Activated T-helper 1 cell treated with anti-CD3 and anti-CD28 coated beads, Interleukin-12 subunit alpha, Interleukin-12 subunit beta, Interleukin-2, Interleukin-4 antibody, amounts not matched to agents 30 ng/mL and 10 ng/mL and 1 ng/mL, durations not matched to agents 14 hours and 24 hours and 36 hours (primary cell): ENCODE measurements at regions of chr2 and their contacts with region 1.

Region 1: DNA sequence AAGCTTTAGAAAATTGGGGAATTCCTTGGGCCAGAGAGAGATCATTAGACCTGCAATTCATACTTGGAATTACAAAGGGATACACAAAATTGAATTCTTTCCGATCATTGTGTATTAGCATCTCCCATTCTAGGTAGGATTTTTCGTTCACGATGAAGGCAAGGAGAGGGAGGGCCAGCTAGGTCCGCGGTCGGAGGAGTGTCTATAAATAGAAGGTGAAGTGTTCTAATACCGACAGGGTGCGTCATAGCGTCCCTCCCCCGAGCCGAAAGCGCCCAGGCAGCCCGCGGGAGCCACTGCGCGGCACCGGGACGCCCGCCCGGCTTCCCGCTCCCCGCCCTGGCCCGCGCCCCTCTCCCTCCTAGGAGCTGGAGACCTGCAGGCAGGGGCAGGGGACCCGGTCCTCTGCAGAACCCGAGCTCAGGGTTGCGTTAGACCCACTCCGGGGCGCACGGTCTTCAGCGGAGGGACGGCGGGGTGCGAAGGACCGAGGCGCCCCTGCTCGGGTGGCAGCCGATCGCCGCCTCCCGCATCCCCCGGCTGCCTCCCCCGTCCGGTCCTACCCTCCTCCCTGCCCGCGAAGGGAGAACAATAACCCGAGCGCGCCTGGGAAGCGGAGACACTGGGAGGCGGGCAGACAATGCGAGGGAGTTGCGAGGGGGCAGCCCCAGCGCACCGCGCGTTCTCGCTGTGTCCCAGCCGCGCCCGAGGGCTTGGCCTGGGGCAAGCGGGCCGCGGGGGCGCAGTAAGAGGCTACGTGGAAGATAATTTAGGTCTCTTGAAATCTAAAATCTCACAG is 114.2 kb upstream of the SERTAD2 start:
- DNase-seq: peak; percentile 69
- H3K4me3 Mint-ChIP-seq: peak overlapping the region; percentile 91
- H3K27ac Mint-ChIP-seq: peak overlapping the region; percentile 95
- H3K4me1 Mint-ChIP-seq: peaks cover 47% of the 10 kb centered on the region
- H3K27me3 Mint-ChIP-seq: no peaks in the 10 kb centered on the region

Region 2: GRCh38 chr2:64653349-64654062 is 114.4 kb before region 1 on chr2 and contains the start of gene SERTAD2:
- intact Hi-C with region 1: loop called (anchors 1 kb)
- DNase-seq: peak; percentile 83
- H3K4me3 Mint-ChIP-seq: peak within 1 kb of the TSS; percentile 90
- H3K27ac Mint-ChIP-seq: peak within 1 kb of the TSS; percentile 90
- H3K4me1 Mint-ChIP-seq: peaks cover 71% of the 10 kb centered on the region
- H3K27me3 Mint-ChIP-seq: no peaks in the 10 kb centered on the region
- total RNA-seq, gene SERTAD2: 27.3 and 28.5 TPM in 2 replicates

Region 3: GRCh38 chr2:64737547-64737946 is 30.3 kb before region 1 on chr2:
- intact Hi-C with region 1: loop called (anchors 1 kb)
- DNase-seq: no peak
- H3K4me3 Mint-ChIP-seq: peak overlapping the region; percentile 46
- H3K27ac Mint-ChIP-seq: peak overlapping the region; percentile 91
- H3K4me1 Mint-ChIP-seq: peaks cover 54% of the 10 kb centered on the region
- H3K27me3 Mint-ChIP-seq: no peaks in the 10 kb centered on the region

Region 4: GRCh38 chr2:64819774-64820696 is 52.2 kb after region 1 on chr2:
- intact Hi-C with region 1: loop called (anchors 1 kb)
- DNase-seq: peak; percentile 30
- H3K4me3 Mint-ChIP-seq: peak overlapping the region; percentile 68
- H3K27ac Mint-ChIP-seq: peak overlapping the region; percentile 93
- H3K4me1 Mint-ChIP-seq: peaks cover 39% of the 10 kb centered on the region
- H3K27me3 Mint-ChIP-seq: peaks cover 2% of the 10 kb centered on the region

Region 5: DNA sequence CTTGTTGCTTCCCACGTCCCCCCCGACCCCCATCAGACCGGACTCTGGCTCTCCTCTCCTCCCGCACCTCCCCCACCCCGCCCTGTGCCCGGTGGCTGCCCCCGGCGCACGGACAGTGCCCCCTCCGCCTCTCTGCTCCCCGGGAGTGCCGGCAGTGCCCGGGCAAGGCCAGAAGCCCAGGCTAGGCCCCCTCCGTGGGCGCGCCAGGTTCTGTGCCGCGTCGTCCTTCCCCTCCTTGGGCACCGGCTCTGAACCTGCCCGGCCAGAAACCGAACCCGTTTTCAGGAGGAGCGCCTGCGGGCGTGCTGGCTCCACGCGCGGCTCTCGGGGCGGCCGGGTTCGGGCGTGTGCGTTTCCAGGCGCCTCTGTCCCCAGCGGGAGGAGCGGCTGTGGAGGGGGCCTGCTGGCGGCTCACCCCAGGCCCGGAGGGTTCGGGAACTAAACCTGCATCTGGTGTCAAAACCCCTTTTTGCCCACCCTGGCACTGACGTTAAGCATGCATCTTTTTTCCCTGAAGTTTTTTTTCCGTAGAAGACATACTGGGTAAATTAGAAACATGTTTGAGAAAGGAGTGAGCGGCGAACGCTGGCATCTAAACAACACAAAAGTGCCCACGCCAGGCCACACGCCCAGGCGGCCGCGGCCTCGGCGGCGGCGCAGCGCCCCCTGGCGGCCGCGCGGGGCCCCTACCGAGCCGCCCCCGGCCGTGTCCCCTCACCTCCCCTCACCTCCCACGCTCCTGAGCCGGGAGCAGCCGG is 97.4 kb after region 1 on chr2:
- intact Hi-C with region 1: loop called (anchors 1 kb)
- DNase-seq: peak; percentile 61
- H3K4me3 Mint-ChIP-seq: peak overlapping the region; percentile 78
- H3K27ac Mint-ChIP-seq: peak overlapping the region; percentile 60
- H3K4me1 Mint-ChIP-seq: peaks cover 6% of the 10 kb centered on the region
- H3K27me3 Mint-ChIP-seq: peaks cover 13% of the 10 kb centered on the region